ENCODE measurements at regions of chr19 and their contacts with region 1.

Region 1: DNA sequence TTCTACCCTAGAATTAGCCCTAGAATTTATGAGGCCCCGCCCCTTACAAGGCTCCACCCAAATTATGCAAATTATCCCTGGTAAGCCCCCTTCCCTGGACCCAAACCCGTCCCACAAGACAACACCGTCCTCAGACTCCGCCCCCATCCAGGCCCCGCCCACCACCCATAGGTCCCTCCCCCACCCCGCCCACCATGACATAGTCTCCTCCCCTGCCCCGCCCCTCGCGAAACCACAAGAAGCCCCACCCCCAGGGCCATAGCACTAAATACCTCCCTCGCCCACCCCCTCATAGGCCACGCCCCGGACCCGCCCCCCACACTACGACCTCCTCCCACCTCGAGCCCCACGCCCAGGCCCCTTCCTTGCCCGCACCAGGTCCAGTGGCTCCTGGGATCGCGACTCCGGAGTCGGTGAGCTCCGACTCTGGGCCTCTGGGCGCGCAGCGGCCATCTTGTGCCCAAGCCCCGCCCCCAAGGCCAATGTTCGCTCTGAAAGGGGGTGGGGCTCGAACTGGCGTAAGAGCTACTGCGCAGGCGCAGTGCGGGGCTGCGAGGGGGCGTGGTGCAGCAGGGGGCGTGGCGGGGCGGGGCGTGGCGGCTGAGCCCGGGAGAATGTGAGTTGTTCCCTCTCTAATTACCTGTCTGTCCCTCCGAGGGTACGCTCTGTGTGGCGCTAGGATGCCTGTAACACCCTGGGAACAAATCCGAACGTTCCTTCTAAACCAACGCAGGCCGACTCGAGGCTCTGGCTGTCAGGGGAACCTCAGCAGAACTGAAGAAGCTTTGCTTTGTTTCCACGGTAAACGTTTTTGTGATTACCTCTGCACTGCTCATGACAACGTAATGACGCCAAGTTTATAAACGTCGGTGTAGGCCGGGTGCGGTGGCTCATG is at the start of gene ZNF784:
- DNase-seq: peak; percentile 94
- ATAC-seq: peak; percentile 62
- H3K4me3 Mint-ChIP-seq: peak within 1 kb of the TSS; percentile 85
- H3K27ac Mint-ChIP-seq: peak within 1 kb of the TSS; percentile 98
- H3K4me1 Mint-ChIP-seq: peaks cover 57% of the 10 kb centered on the region
- H3K27me3 Mint-ChIP-seq: peaks cover 13% of the 10 kb centered on the region
- total RNA-seq, gene ZNF784: 5.2 to 5.3 TPM

Region 2: GRCh38 chr19:55516878-55517620 is 107.3 kb before region 1 on chr19:
- CTCF ChIA-PET with region 1: interaction called, 15 read pairs
- POLR2A ChIA-PET with region 1: no interaction called
- DNase-seq: peak; percentile 93
- ATAC-seq: peak; percentile 100
- H3K4me3 Mint-ChIP-seq: peak overlapping the region; percentile 49
- H3K27ac Mint-ChIP-seq: peak overlapping the region; percentile 73
- H3K4me1 Mint-ChIP-seq: peaks cover 5% of the 10 kb centered on the region
- H3K27me3 Mint-ChIP-seq: no peaks in the 10 kb centered on the region

Region 3: GRCh38 chr19:55599468-55600279 is 24.7 kb before region 1 on chr19 and contains the start of gene FIZ1:
- CTCF ChIA-PET with region 1: interaction called, 59 read pairs
- POLR2A ChIA-PET with region 1: interaction called, 10 read pairs
- DNase-seq: peak; percentile 98
- ATAC-seq: peak; percentile 80
- H3K4me3 Mint-ChIP-seq: peak within 1 kb of the TSS; percentile 97
- H3K27ac Mint-ChIP-seq: peak within 1 kb of the TSS; percentile 100
- H3K4me1 Mint-ChIP-seq: peaks cover 38% of the 10 kb centered on the region
- H3K27me3 Mint-ChIP-seq: no peaks in the 10 kb centered on the region
- total RNA-seq, gene FIZ1: 13.6 to 13.7 TPM

Region 4: GRCh38 chr19:55605207-55605636 is 19.1 kb before region 1 on chr19:
- CTCF ChIA-PET with region 1: interaction called, 59 read pairs
- POLR2A ChIA-PET with region 1: interaction called, 27 read pairs
- DNase-seq: peak; percentile 99
- ATAC-seq: peak; percentile 84
- H3K4me3 Mint-ChIP-seq: peak overlapping the region; percentile 83
- H3K27ac Mint-ChIP-seq: peak overlapping the region; percentile 94
- H3K4me1 Mint-ChIP-seq: peaks cover 61% of the 10 kb centered on the region
- H3K27me3 Mint-ChIP-seq: no peaks in the 10 kb centered on the region

Region 5: GRCh38 chr19:55653758-55654539 is 29.6 kb after region 1 on chr19:
- CTCF ChIA-PET with region 1: interaction called, 13 read pairs
- POLR2A ChIA-PET with region 1: no interaction called
- DNase-seq: peak; percentile 100
- ATAC-seq: peak; percentile 83
- H3K4me3 Mint-ChIP-seq: peak overlapping the region; percentile 83
- H3K27ac Mint-ChIP-seq: peak overlapping the region; percentile 94
- H3K4me1 Mint-ChIP-seq: peaks cover 42% of the 10 kb centered on the region
- H3K27me3 Mint-ChIP-seq: no peaks in the 10 kb centered on the region

Measured in activated CD8-positive, alpha-beta T cell treated with anti-CD3 and anti-CD28 coated beads, Interleukin-2, amount 10 ng/mL, durations not matched to agents 7 days and 5 days (primary cell).